ENCODE measurements at regions of chr10 and their contacts with region 1.

Region 1: GRCh38 chr10:103602028-103602851 is 108.7 kb downstream of the NEURL1 start:
- DNase-seq: peak; percentile 37
- ATAC-seq: no peak

Region 2: GRCh38 chr10:103685880-103686669 is 83.8 kb after region 1 on chr10:
- intact Hi-C with region 1: loop called (anchors 5 kb)
- DNase-seq: peak; percentile 86
- ATAC-seq: peak; percentile 84

Region 3: DNA sequence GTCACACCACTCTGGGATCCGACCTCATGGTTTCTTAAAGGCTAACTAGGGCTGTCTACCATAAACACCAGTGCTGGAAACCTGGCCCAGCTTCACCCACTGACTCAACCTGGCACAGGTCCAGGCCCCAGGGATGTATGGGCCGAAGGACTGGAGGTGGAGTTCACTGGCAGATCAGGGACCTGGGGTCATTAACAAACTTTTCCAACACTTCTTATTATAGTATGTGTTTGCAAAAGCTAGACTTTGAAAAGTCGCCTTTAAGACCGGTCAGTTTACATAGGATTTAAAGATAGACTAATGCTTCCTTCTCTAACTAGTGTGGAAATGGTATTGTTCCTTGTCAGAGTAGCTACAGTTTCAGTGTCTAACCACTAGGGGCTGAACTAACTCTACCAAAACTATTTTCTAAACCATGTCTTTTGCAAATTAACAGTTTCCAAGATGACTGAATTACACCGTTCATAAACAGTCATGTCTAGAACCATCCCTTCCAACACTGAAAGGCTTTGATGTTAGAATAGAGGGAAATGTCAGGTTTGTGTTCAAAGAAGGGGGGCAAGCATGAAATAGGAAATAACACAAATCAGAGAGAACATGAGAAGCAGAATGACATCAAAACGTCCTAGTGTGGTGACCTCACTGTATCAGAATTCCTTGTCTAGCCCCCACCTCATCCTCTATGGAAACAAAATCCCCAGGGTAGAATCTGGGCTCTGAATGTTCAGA is 286.0 kb after region 1 on chr10:
- intact Hi-C with region 1: no loop called
- DNase-seq: peak; percentile 69
- ATAC-seq: peak; percentile 64